ENCODE measurements at regions of chr5 and their contacts with region 1.

Region 1: DNA sequence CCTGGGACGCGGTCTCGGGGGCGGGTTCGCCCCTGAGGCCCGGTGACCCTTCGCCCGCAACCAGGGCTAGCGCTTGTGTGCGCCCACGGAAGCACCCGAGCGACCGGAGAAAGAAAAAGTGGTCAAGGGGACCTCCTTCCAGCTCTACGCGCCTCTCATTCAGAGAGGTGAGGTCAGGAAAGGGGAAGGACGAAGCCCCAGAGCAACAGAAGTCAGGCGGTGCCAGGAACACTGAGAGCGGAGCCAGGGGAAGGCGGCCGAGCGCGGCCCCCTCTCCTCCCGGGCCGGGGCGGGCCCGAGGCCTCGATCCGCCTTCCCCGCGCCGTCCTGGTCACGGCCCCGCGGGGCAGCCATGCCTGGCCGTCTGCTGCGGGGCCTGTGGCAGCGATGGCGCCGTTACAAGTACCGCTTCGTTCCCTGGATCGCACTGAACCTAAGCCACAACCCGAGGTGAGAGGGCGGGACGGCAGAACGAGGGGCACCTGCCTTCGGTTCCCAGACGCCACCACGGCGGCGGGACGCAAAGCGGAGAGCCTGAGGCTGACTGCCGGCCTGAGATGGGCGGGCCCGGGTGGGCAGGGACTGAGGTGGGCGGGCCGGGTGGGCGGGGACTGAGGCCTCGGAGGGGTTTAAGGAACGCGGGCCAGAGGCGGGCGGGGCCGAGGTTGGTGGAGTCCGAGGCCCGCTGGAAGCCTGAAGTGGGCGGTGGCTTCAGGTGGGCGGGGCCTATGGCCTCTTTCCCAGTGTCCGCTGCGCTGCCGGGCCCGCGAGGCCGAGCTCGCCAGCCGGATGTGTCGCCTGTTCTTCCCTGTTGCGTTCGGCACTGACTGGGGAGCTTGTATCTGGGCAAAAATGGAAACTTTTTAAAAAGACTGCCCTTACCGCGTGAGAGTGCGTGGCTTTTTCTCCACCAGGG is at the start of gene SETD9:
- DNase-seq: peak; percentile 96 to 97
- ATAC-seq: peak; percentile 85 to 91
- H3K4me3 ChIP-seq: peak within 1 kb of the TSS; percentile 67 to 96 (median 80)
- H3K27ac ChIP-seq: peak within 1 kb of the TSS; percentile 86 to 96 (median 90)
- H3K4me1 ChIP-seq: peaks cover 5 to 10% of the 10 kb centered on the region in 2 donors
- H3K27me3 ChIP-seq: no peaks in the 10 kb centered on the region
- CTCF ChIP-seq: no peak
- POLR2A ChIP-seq: peak; percentile 66 to 73
- total RNA-seq, gene SETD9: 7.0 to 29.1 (median 13.9) TPM

Region 2: DNA sequence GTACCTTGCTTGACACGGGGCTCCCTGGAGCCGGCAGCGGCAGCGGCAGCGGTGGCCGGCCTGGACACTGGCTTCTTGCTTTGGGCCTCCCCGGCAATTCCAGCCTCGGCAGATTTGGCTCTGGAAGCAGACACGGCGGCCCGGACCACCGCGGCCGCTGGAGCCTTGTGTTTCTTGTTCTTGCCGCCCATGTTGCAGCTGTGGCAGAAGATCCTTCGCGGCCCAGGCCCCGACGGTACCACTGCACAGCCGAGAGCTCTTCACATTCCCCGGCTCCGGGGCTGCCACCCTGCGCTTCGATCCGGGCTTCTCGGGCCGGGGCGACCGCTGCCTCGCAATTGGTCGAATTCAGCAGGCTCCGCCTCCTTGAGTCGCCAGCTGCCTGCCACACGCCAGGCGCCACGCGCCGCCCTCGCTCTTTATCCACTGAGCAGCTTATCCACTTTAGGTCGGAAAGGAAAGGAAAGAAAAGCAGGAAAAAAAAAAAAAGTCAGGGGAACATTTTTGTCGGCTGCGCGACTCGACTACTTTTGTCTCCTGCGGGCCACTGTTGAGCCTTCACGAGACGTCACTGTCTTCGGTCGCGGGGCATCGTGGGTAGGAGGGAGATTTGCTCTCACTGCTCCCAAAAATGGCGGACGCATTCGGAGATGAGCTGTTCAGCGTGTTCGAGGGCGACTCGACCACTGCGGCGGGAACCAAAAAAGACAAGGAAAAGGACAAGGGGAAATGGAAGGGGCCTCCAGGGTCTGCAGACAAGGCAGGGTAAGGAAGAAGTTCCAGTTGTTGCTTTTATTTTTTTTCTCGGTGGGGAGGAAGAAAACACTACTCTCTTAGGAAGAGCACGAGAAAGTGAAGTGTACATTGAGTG is 1601.9 kb before region 1 on chr5 and contains the starts of genes DHX29 and MTREX:
- in situ Hi-C with region 1: no loop called
- intact Hi-C with region 1: loop called (anchors 10 kb)
- DNase-seq: peak; percentile 84 to 86
- ATAC-seq: peak; percentile 96
- H3K4me3 ChIP-seq: peak within 1 kb of the TSS; percentile 64 to 97 (median 86)
- H3K27ac ChIP-seq: peak within 1 kb of the TSS; percentile 86 to 96 (median 95)
- H3K4me1 ChIP-seq: peaks cover 47 to 68% of the 10 kb centered on the region in 2 donors
- H3K27me3 ChIP-seq: no peaks in the 10 kb centered on the region
- CTCF ChIP-seq: no peak
- POLR2A ChIP-seq: peak; percentile 63 to 64
- total RNA-seq, gene DHX29: 33.1 to 44.6 (median 41.0) TPM
- total RNA-seq, gene MTREX: 92.4 to 124 (median 109) TPM

Region 3: GRCh38 chr5:56814963-56815658 is 94.4 kb before region 1 on chr5 and contains the start of gene MAP3K1:
- in situ Hi-C with region 1: no loop called
- intact Hi-C with region 1: loop called (anchors 5 kb)
- DNase-seq: peak; percentile 24 to 55
- ATAC-seq: peak; percentile 79
- H3K4me3 ChIP-seq: peak within 1 kb of the TSS; percentile 66 to 82 (median 76)
- H3K27ac ChIP-seq: peak within 1 kb of the TSS; percentile 75 to 94 (median 84)
- H3K4me1 ChIP-seq: peaks cover 28 to 38% of the 10 kb centered on the region in 2 donors
- H3K27me3 ChIP-seq: no peaks in the 10 kb centered on the region
- CTCF ChIP-seq: no peak
- POLR2A ChIP-seq: peak in 1 of 2 donors; percentile 13
- total RNA-seq, gene MAP3K1: 4.2 to 6.8 (median 5.4) TPM

Region 4: DNA sequence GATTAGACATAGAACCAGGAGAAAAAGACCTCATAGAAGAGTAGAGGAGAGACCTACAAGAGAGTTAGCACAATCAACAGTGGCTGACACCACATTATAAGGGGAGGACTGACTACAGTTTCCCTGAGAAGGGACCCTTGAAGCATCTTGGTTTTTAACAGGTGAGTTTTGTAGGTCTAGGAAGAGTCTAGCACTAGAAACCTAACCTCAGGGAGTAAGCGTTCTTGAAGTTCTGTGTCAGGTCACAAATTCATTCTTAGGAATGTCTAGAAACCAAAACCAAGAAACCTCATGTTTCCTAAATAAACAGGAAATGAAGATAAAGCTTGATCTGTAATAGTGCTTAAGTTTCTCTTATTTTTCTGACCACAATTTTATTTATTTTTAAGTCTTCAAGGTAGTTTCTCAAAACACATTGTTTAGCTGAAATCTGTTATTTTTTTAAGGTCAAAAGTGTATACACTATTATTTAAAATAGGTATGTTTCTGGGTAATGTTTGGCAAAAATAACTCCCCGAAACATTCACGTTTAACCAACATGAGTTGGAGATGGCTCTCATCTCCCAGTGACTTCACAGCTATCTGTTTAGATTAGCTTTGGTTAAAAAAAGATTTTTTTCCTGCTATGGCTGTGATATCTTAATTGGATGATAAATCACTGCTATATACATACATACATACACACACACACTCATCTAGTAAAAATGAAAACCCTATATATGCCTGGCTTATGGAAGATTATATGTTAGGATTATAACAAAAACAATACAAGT is 57.1 kb before region 1 on chr5:
- in situ Hi-C with region 1: no loop called
- intact Hi-C with region 1: no loop called
- DNase-seq: no peak
- ATAC-seq: no peak
- H3K4me3 ChIP-seq: no peak overlapping the region
- H3K27ac ChIP-seq: peak overlapping the region in 2 of 4 donors; percentile 0 to 36
- H3K4me1 ChIP-seq: peaks cover 25 to 57% of the 10 kb centered on the region in 2 donors
- H3K27me3 ChIP-seq: no peaks in the 10 kb centered on the region
- CTCF ChIP-seq: no peak
- POLR2A ChIP-seq: no peak

Region 5: DNA sequence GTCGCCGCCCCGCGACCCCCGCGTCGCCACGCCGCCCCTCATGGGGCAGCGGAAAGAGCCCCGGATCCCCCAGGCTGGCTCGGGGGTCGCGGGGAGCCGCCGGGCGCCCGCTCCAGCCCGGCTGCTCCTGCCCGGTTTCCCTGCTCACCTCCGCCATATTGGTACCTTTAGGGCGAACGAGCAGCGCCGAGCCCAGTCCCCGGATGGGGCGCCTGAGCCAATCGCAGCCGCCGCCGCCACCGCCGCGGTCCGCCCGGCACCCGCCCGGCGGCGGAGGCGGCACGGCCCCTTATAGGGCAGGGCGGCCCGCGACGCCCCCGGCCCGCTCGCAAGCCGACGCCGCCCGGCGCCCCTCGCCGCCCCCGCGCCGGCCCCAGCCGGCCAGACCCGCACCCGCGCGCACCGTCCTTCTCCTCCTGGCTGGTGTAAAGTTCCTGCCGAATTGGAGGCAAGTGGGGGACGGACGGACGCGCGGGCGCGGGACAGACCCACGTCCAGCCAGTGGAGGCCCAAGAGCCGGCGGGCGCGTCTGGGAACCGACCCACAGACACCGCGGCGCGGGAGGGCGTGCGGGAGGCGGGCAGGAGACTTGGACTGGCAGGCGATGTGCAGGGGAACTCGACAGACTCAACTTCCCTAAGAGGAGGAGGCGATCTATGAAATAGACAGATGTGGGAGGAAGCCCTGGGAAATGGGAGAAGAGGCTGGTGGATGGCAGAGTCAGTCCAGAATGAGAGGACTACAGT is 42.6 kb after region 1 on chr5 and contains the start of gene MIER3:
- in situ Hi-C with region 1: no loop called
- intact Hi-C with region 1: loop called (anchors 1 kb)
- DNase-seq: peak; percentile 66 to 67
- ATAC-seq: peak; percentile 93 to 94
- H3K4me3 ChIP-seq: peak within 1 kb of the TSS; percentile 62 to 90 (median 78)
- H3K27ac ChIP-seq: peak within 1 kb of the TSS; percentile 76 to 83 (median 79)
- H3K4me1 ChIP-seq: peaks cover 0 to 15% of the 10 kb centered on the region in 2 donors
- H3K27me3 ChIP-seq: no peaks in the 10 kb centered on the region
- CTCF ChIP-seq: no peak
- POLR2A ChIP-seq: peak; percentile 21 to 31
- total RNA-seq, gene MIER3: 12.2 to 33.4 (median 20.4) TPM

Region 6: GRCh38 chr5:57032151-57032551 is 122.6 kb after region 1 on chr5:
- in situ Hi-C with region 1: no loop called
- intact Hi-C with region 1: no loop called
- DNase-seq: no peak
- ATAC-seq: no peak
- H3K4me3 ChIP-seq: no peak overlapping the region
- H3K27ac ChIP-seq: no peak overlapping the region
- H3K4me1 ChIP-seq: no peaks in the 10 kb centered on the region
- H3K27me3 ChIP-seq: no peaks in the 10 kb centered on the region
- CTCF ChIP-seq: no peak
- POLR2A ChIP-seq: no peak

Region 7: DNA sequence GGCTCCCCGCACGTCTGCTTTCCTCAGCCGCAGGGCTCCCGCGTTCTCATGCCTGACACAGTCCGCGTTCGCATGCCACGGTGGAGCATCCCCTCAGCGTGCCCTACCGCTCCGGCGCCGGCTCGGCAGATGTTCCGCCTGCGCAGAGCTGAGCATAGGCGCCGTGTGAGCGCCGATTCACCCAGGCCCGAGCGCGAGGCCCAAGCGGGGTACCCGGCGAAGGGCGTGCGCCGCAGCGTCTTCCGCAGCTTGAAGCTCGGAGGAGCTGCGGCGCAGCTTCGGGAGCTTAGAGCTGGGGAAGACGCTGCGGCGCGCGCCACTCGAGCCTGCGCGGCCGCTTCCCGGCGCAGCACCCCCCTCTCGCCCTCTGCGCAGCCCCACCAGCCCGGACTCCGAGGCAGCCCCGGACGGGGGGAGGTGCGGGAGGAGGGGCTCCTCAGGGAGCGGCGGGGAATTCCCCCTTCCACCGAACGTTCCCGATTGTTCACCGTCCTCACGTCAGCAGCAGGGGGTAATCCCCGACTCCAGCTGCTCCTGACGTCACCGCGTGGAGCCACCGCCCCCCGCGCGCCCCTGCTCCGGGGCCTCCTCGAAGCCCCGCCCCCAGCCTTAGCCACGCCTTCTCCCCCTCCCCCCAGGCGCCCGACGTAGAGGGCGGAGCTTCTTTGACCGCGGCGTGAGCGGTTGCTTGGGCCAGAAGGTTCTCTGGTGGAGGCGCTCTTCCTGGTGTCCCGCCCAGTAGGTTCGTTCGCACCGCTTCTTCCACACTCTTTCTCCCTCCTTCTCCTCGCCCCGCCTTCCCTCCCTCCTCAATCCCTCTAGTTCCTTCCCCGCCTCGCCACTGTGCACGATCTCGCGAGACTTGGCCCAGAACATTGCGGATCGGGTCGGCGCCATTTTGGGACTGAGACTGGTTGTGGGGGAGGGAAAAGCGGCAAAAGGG is 263.9 kb after region 1 on chr5 and contains the start of gene GPBP1:
- in situ Hi-C with region 1: no loop called
- intact Hi-C with region 1: loop called (anchors 1 kb)
- DNase-seq: peak; percentile 96 to 98
- ATAC-seq: peak; percentile 83 to 84
- H3K4me3 ChIP-seq: peak within 1 kb of the TSS; percentile 84 to 99 (median 92)
- H3K27ac ChIP-seq: peak within 1 kb of the TSS; percentile 98 to 100 (median 100)
- H3K4me1 ChIP-seq: peaks cover 25 to 35% of the 10 kb centered on the region in 2 donors
- H3K27me3 ChIP-seq: no peaks in the 10 kb centered on the region
- CTCF ChIP-seq: peak in 1 of 5 experiments; percentile 9
- POLR2A ChIP-seq: peak; percentile 79 to 85
- total RNA-seq, gene GPBP1: 40.4 to 58.0 (median 50.5) TPM